ENCODE measurements at regions of chr3 and their contacts with region 1.

Region 1: DNA sequence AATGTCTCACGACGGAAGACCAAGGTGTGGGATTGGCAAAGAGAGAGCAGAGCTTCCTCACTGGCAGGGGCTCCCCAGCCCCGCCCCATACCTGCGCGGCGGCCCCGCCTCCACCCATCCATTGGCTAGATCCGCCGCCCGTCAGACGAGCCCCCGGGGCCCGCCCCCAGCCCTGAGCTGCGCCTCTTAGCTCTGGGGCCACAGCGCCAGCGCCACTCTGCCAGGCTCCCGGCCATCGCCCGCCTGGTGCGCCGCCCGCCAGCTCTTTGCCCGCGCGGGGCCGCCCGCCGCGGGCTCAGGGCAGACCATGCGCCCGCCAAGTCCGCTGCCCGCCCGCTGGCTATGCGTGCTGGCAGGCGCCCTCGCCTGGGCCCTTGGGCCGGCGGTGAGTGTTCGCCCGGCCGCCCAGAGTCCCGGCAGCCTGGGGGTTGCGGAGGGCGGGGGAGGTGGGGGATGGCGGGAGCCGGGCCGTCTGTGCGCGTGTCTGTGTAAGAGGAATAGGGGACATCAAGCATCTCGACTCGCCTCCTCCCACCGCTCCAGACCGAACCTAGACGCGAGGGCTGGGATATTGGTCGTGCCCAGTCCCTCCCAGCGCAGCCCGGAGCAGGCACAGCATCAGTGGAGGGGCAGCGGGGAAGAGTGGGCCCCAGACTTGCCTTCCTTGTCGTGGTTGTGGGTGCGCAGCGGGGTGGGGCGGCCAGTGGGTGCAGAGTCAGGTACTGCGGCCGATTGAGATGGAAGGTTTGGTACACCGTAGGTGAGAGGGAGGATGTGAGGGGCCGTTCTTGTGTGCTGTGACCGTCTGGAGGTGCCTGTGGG is at the start of gene VIPR1:
- DNase-seq: peak; percentile 91 to 93 (median 92)
- ATAC-seq: peak; percentile 97
- H3K4me3 ChIP-seq: peak within 1 kb of the TSS in 1 of 2 donors; percentile 24
- H3K27ac ChIP-seq: no peak within 1 kb of the TSS
- H3K4me1 ChIP-seq: peaks cover 27% of the 10 kb centered on the region
- H3K27me3 ChIP-seq: peaks cover 0 to 4% of the 10 kb centered on the region in 2 donors
- CTCF ChIP-seq: peak in 1 of 7 experiments; percentile 11
- POLR2A ChIP-seq: peak in 2 of 3 donors; percentile 19 to 44
- total RNA-seq, gene VIPR1: 0.99 to 10.6 TPM

Region 2: GRCh38 chr3:42539869-42540714 is 37.5 kb after region 1 on chr3:
- intact Hi-C with region 1: loop called (anchors 5 kb)
- DNase-seq: peak; percentile 83 to 87 (median 85)
- ATAC-seq: peak; percentile 73
- H3K4me3 ChIP-seq: no peak overlapping the region
- H3K27ac ChIP-seq: no peak overlapping the region
- H3K4me1 ChIP-seq: peaks cover 34% of the 10 kb centered on the region
- H3K27me3 ChIP-seq: no peaks in the 10 kb centered on the region
- CTCF ChIP-seq: peak; percentile 63 to 86 (median 76)
- POLR2A ChIP-seq: no peak

Region 3: DNA sequence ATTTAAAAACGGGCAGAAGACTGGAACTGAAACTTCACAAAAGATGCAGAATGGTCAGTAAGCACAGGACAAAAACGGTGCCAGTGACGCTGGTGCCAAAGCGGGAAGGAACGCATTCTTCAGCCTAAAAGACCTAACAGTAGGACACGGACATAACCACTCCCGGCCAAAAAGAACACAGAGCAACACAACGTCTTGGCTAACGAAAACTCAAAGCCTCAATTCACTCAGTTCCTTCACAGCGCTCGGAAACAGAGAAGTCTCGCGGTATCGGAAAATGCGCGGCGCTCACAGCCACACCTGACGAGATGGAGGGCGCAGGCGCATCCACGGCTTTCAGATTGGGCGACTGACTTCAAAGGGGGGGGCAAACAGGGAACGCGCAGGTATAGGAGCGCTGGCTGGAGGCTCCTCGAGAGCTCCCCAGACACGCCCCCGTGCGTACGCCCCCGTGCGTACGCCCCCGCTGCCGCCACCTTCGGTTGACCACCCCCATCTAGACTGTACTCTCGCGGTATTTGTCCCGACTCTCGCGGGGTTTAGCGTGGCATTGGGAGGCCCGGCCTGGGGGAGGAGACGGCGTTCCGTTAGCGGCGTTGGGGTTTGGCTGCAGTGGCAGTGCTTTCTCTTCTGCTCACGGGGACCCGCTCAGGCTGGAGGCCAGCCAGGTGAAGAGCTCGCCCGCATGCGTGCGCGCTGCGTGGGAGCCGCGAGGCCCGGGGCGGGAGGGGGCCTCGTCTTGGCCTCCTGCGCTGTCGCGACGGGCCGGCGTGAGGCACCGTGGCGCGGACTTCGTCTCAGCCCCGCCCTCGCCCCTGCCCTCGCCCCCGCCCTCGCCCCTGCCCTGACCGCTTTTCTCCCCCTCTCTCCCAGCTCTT is 97.7 kb after region 1 on chr3 and contains the start of gene NKTR:
- intact Hi-C with region 1: no loop called
- DNase-seq: peak; percentile 98 to 99 (median 99)
- ATAC-seq: peak; percentile 95
- H3K4me3 ChIP-seq: peak within 1 kb of the TSS; percentile 77 to 95
- H3K27ac ChIP-seq: peak within 1 kb of the TSS; percentile 84 to 94 (median 89)
- H3K4me1 ChIP-seq: peaks cover 42% of the 10 kb centered on the region
- H3K27me3 ChIP-seq: no peaks in the 10 kb centered on the region
- CTCF ChIP-seq: peak in 2 of 7 experiments; percentile 10 to 42
- POLR2A ChIP-seq: peak; percentile 79 to 90 (median 86)
- total RNA-seq, gene NKTR: 115 to 128 TPM